ENCODE measurements at regions of chr2 and their contacts with region 1.

Region 1: GRCh38 chr2:43169987-43170386 is 56.4 kb downstream of the ZFP36L2 start:
- DNase-seq: peak; percentile 80
- H3K4me3 ChIP-seq: no peak overlapping the region
- H3K27ac ChIP-seq: no peak overlapping the region
- H3K4me1 ChIP-seq: peaks cover 51% of the 10 kb centered on the region
- CTCF ChIP-seq: peak; percentile 94

Region 2: GRCh38 chr2:43194121-43194869 is 24.3 kb after region 1 on chr2:
- CTCF ChIA-PET with region 1: interaction called, 3 read pairs
- POLR2A ChIA-PET with region 1: interaction called, 10 read pairs
- intact Hi-C with region 1: no loop called
- DNase-seq: no peak
- H3K4me3 ChIP-seq: peak overlapping the region; percentile 33
- H3K27ac ChIP-seq: peak overlapping the region; percentile 71
- H3K4me1 ChIP-seq: peaks cover 48% of the 10 kb centered on the region
- CTCF ChIP-seq: no peak

Region 3: GRCh38 chr2:43219383-43220228 is 49.6 kb after region 1 on chr2:
- CTCF ChIA-PET with region 1: interaction called, 5 read pairs
- POLR2A ChIA-PET with region 1: interaction called, 13 read pairs
- intact Hi-C with region 1: loop called (anchors 1 kb)
- DNase-seq: peak; percentile 94
- H3K4me3 ChIP-seq: peak overlapping the region; percentile 89
- H3K27ac ChIP-seq: peak overlapping the region; percentile 91
- H3K4me1 ChIP-seq: peaks cover 67% of the 10 kb centered on the region
- CTCF ChIP-seq: no peak; the same call in 1 of the 2 replicates

Region 4: GRCh38 chr2:43484323-43484930 is 314.4 kb after region 1 on chr2:
- CTCF ChIA-PET with region 1: no interaction called
- POLR2A ChIA-PET with region 1: interaction called, 3 read pairs
- intact Hi-C with region 1: loop called (anchors 2 kb)
- DNase-seq: peak; percentile 83
- H3K4me3 ChIP-seq: no peak overlapping the region
- H3K27ac ChIP-seq: no peak overlapping the region
- H3K4me1 ChIP-seq: no peaks in the 10 kb centered on the region
- CTCF ChIP-seq: peak; percentile 95

Region 5: DNA sequence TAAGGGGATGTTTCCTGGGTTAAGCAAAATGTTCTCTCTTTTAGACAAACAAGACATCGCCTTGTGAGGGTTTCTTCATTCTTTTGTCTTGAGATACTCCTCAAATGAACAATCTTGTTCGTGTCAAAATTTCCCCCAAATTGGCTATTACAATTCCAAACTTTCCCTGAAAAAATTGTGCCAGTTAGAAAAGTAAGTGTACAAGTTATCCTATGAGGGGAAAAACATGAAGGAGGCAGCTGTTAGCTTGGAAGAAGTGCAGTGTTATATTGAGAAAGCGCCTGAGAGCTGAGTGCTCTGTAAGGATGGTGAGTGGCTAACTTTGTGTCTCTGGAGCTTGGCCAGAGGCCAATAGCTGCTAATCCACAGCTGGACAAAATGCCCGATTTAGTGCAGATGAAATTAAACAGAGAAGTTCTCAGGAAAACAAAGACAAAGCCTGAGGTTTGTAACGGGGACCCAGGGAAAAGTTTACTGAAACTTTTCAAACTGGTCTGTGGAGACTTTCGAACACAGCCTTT is 453.0 kb after region 1 on chr2:
- CTCF ChIA-PET with region 1: no interaction called
- POLR2A ChIA-PET with region 1: no interaction called
- intact Hi-C with region 1: no loop called
- DNase-seq: no peak
- H3K4me3 ChIP-seq: no peak overlapping the region
- H3K27ac ChIP-seq: no peak overlapping the region
- H3K4me1 ChIP-seq: no peaks in the 10 kb centered on the region
- CTCF ChIP-seq: no peak

Region 6: GRCh38 chr2:43853141-43854081 is 683.4 kb after region 1 on chr2:
- CTCF ChIA-PET with region 1: no interaction called
- POLR2A ChIA-PET with region 1: no interaction called
- intact Hi-C with region 1: no loop called
- DNase-seq: no peak
- H3K4me3 ChIP-seq: no peak overlapping the region
- H3K27ac ChIP-seq: no peak overlapping the region
- H3K4me1 ChIP-seq: no peaks in the 10 kb centered on the region
- CTCF ChIP-seq: no peak